ENCODE measurements at regions of chr12 and their contacts with region 1.

Region 1: DNA sequence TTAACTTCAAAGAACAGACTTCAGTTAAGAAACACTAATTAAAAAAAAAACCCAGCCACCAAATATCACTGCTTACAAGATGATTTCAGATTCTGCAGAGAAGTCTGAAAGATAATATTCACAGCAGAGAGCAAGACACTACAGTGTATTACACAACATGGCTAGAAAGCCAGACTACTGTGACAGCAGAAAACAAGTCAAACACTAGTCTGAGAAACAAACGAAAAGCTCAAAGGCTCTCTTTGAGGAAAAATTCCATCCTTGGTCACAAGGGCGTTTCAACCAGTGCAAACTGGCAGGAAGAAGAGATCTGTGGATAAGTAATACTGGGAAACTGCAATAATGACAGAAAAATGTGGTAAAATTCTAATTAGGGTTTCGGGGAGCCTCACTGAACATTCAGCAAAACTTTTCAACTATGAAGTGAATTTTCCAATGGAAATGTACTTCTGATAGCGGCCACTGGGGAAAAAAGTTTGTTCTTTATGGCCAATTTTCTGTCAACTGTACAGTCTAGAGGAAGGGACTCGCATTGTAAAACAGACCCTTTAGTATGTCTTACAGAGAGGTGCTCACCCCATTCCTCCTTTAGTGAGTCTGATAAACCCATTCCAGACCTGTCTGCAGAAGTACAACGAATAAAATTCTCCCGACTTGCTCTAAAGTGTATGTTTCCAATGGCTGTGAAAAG is 50.4 kb downstream of the ACADS start:
- DNase-seq: peak in 1 of 2 experiments; percentile 36
- H3K4me3 ChIP-seq: no peak overlapping the region
- H3K4me3 Mint-ChIP-seq: no peak overlapping the region
- H3K27ac Mint-ChIP-seq: no peak overlapping the region
- H3K4me1 ChIP-seq: no peaks in the 10 kb centered on the region
- H3K4me1 Mint-ChIP-seq: peaks cover 10% of the 10 kb centered on the region
- H3K27me3 ChIP-seq: no peaks in the 10 kb centered on the region
- H3K27me3 Mint-ChIP-seq: no peaks in the 10 kb centered on the region
- CTCF ChIP-seq: peak in 1 of 2 experiments; percentile 41

Region 2: GRCh38 chr12:120713861-120714482 is 62.0 kb before region 1 on chr12:
- CTCF ChIA-PET with region 1: no interaction called
- POLR2A ChIA-PET with region 1: no interaction called
- intact Hi-C with region 1: no loop called
- DNase-seq: peak; percentile 76 to 84
- H3K4me3 ChIP-seq: no peak overlapping the region
- H3K4me3 Mint-ChIP-seq: no peak overlapping the region
- H3K27ac Mint-ChIP-seq: no peak overlapping the region
- H3K4me1 ChIP-seq: peaks cover 15% of the 10 kb centered on the region
- H3K4me1 Mint-ChIP-seq: peaks cover 14% of the 10 kb centered on the region
- H3K27me3 ChIP-seq: no peaks in the 10 kb centered on the region
- H3K27me3 Mint-ChIP-seq: no peaks in the 10 kb centered on the region
- CTCF ChIP-seq: peak; percentile 70 to 90

Region 3: DNA sequence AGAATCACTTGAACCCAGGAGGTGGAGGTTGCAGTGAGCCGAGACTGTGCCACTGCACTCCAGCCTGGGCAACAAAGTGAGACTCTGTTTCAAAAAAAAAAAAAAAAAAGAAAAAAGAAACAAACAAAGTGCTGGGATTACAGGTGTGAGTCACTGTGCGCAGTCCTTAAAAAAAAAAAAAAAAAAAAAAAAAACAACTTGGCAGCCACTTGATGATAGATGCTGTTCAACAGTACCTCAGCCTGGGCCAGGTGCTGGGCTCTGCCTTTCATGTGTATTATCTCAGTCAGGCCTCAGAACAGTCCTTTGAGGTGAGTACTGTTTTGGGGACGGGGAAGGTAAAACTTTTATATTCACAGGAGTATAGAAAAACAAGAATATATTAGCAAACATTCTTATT is 40.8 kb before region 1 on chr12:
- CTCF ChIA-PET with region 1: no interaction called
- POLR2A ChIA-PET with region 1: no interaction called
- intact Hi-C with region 1: no loop called
- DNase-seq: no peak
- H3K4me3 ChIP-seq: no peak overlapping the region
- H3K4me3 Mint-ChIP-seq: no peak overlapping the region
- H3K27ac Mint-ChIP-seq: no peak overlapping the region
- H3K4me1 ChIP-seq: no peaks in the 10 kb centered on the region
- H3K4me1 Mint-ChIP-seq: no peaks in the 10 kb centered on the region
- H3K27me3 ChIP-seq: no peaks in the 10 kb centered on the region
- H3K27me3 Mint-ChIP-seq: no peaks in the 10 kb centered on the region
- CTCF ChIP-seq: no peak

Region 4: DNA sequence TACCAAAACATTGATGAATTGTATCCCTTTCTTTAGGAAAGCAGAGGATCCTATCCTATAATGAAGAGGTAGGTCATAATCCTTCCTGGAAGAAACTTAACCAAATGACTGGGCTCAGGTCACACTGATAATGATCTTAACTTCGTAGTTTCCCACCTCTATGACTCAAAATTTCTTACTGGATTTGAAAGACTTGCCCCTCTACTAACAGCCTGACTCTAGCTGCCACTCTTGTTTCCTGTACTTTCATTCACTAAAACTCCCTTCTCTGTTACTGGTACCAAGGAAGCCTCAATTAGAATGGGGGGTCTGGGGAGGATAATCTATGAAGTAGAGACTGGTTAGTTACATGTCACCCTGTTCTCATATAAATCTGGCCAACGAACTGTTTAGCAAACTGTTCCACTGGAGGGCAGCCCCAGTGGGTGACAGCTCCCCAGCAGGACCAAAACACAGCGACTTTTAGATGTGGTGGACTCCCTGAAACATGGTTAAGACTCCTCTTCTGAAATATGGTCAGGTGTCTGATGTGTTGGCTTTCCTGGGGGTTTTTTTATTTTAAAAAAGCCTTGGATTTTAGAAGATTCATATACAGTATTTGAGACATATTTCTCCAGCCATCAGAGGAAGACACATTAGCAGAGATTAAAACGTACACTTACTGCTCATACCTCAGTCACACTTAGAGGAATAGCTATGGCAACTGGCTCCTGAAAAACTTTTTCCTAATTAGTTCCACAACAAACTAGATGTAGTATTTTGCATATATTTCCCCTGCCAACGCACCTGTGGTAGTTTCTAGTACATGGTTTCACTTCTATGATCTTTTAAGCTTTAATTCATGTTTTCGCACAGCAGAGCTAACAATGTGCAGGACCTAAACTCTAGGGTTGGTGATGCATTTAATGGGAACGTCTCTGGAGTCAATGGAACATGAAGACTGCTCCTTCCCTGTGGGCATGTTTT is 22.0 kb after region 1 on chr12:
- CTCF ChIA-PET with region 1: no interaction called
- POLR2A ChIA-PET with region 1: no interaction called
- intact Hi-C with region 1: loop called (anchors 2 kb)
- DNase-seq: no peak
- H3K4me3 ChIP-seq: no peak overlapping the region
- H3K4me3 Mint-ChIP-seq: no peak overlapping the region
- H3K27ac Mint-ChIP-seq: no peak overlapping the region
- H3K4me1 ChIP-seq: peaks cover 13% of the 10 kb centered on the region
- H3K4me1 Mint-ChIP-seq: peaks cover 23% of the 10 kb centered on the region
- H3K27me3 ChIP-seq: no peaks in the 10 kb centered on the region
- H3K27me3 Mint-ChIP-seq: no peaks in the 10 kb centered on the region
- CTCF ChIP-seq: no peak

Region 5: DNA sequence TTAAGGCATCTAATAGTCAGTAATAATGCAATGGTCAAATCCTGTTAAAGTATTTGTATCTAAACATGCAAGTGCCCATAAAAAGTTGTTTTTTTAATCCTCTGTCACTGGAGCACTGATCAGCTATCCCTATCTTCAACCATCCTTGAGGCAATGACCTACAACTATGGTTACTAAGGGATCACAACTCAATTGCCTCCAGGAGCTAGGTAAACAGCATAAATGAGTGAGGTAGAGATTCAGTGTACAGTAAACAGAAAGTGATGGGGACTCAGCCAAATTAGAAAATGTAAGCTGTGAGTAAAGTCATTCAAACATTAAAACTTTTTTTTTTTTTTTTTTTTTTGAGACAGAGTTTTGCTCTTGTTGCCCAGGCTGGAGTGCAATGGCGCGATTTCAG is 109.5 kb after region 1 on chr12:
- CTCF ChIA-PET with region 1: no interaction called
- POLR2A ChIA-PET with region 1: no interaction called
- intact Hi-C with region 1: no loop called
- DNase-seq: no peak
- H3K4me3 ChIP-seq: no peak overlapping the region
- H3K4me3 Mint-ChIP-seq: no peak overlapping the region
- H3K27ac Mint-ChIP-seq: no peak overlapping the region
- H3K4me1 ChIP-seq: no peaks in the 10 kb centered on the region
- H3K4me1 Mint-ChIP-seq: peaks cover under 1% of the 10 kb centered on the region
- H3K27me3 ChIP-seq: no peaks in the 10 kb centered on the region
- H3K27me3 Mint-ChIP-seq: no peaks in the 10 kb centered on the region
- CTCF ChIP-seq: no peak

Region 6: GRCh38 chr12:121005346-121005815 is 229.4 kb after region 1 on chr12:
- CTCF ChIA-PET with region 1: no interaction called
- POLR2A ChIA-PET with region 1: no interaction called
- intact Hi-C with region 1: no loop called
- DNase-seq: peak; percentile 66 to 69
- H3K4me3 ChIP-seq: no peak overlapping the region
- H3K4me3 Mint-ChIP-seq: no peak overlapping the region
- H3K27ac Mint-ChIP-seq: peak overlapping the region; percentile 37
- H3K4me1 ChIP-seq: no peaks in the 10 kb centered on the region
- H3K4me1 Mint-ChIP-seq: no peaks in the 10 kb centered on the region
- H3K27me3 ChIP-seq: no peaks in the 10 kb centered on the region
- H3K27me3 Mint-ChIP-seq: no peaks in the 10 kb centered on the region
- CTCF ChIP-seq: peak; percentile 61 to 64

Measured in Caco-2 (cell line).